Motor neuron (in vitro differentiated cells): ENCODE measurements at regions of chr1 and their contacts with region 1.

Region 1: DNA sequence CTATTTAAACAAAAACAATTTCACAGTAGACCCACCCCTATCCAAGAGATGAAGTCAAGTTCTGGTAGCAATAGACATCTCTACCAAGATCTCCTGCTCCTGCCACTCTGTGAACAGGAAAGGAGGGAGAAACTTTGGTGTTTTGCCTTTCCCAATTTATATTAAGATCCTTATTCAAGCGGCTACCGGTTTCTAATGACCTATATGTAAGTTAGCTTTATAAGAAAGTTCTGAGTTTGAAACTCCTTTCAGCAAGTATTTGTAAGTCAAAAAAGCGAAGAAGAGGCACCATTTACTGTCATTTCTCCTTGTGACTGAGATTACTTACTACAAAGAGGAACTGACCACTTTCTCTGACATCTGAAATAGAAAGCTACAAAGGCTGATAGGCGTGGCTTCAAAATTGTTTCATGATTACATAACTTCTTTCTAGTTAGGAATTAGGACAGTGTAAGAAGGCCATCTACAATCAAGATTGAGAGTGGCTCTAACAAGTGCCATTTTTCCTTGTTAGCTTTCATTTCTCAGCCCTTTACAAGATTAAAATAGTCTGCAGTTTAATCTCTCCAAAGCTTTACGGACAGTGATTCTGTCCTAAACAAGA is at the start of gene MNDA:
- ATAC-seq: peak in 2 of 8 experiments; percentile 28 to 54
- H3K4me3 ChIP-seq: no peak within 1 kb of the TSS
- H3K27ac ChIP-seq: no peak within 1 kb of the TSS
- H3K4me1 ChIP-seq: no peaks in the 10 kb centered on the region
- total RNA-seq, gene MNDA: 0.22 TPM in 1 of 8 experiments, not detected in the others

Region 2: DNA sequence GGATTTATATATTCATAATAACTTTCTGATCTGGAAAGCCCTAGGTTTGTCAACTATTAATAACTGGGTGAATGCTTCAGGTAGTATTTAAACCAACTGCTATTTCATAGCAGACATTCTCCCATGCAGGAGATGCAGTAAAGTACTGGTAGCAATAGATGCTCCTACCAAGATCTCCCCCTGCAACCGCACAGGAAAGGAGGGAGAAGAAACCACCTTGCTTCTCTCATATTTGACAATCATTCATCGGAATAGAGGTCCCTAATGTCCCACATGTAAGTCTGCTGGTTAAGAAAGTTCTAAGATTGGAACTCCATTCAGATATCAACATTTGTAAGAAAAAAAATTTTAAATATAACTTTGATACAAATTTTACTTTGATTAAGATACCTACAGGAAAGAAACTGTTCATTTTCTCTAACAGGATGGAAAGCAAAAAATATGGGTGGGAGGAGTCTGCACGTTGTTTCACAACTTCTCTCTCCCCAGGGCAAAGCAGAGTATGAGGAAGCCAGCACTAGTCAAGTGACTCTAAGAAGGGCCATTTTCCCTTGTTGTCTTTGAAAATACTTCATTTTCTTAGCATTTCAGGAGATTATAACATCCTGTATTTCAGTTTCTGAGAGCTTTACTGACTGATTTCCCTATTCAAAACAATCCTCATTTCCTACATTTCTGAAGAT is 100.2 kb after region 1 on chr1 and contains the start of gene PYHIN1:
- in situ Hi-C with region 1: loop called in 1 of 9 experiments (anchors 25 kb)
- ATAC-seq: peak in 2 of 8 experiments; percentile 59 to 68
- H3K4me3 ChIP-seq: no peak within 1 kb of the TSS
- H3K27ac ChIP-seq: no peak within 1 kb of the TSS
- H3K4me1 ChIP-seq: no peaks in the 10 kb centered on the region
- total RNA-seq, gene PYHIN1: 0.40 to 3.5 (median 0.64) TPM in 4 of 8 experiments, not detected in the others